ENCODE measurements at regions of chr2 and their contacts with region 1.

Region 1: GRCh38 chr2:202014759-202015211 is 18.9 kb upstream of the FZD7 start:
- DNase-seq: no peak
- ATAC-seq: no peak
- H3K4me3 ChIP-seq: no peak overlapping the region
- H3K4me3 Mint-ChIP-seq: no peak overlapping the region
- H3K27ac ChIP-seq: no peak overlapping the region
- H3K27ac Mint-ChIP-seq: no peak overlapping the region
- H3K4me1 ChIP-seq: no peaks in the 10 kb centered on the region
- H3K4me1 Mint-ChIP-seq: no peaks in the 10 kb centered on the region
- H3K27me3 ChIP-seq: no peaks in the 10 kb centered on the region
- H3K27me3 Mint-ChIP-seq: peaks cover 19% of the 10 kb centered on the region
- CTCF ChIP-seq: no peak

Region 2: GRCh38 chr2:202056392-202057010 is 41.7 kb after region 1 on chr2:
- CTCF ChIA-PET with region 1: no interaction called
- POLR2A ChIA-PET with region 1: no interaction called
- intact Hi-C with region 1: loop called in 1 of 2 experiments (anchors 5 kb)
- DNase-seq: peak in 2 of 9 experiments; percentile 13 to 24
- ATAC-seq: no peak
- H3K4me3 ChIP-seq: no peak overlapping the region
- H3K4me3 Mint-ChIP-seq: no peak overlapping the region
- H3K27ac ChIP-seq: no peak overlapping the region
- H3K27ac Mint-ChIP-seq: no peak overlapping the region
- H3K4me1 ChIP-seq: no peaks in the 10 kb centered on the region
- H3K4me1 Mint-ChIP-seq: no peaks in the 10 kb centered on the region
- H3K27me3 ChIP-seq: peaks cover 2 to 4% of the 10 kb centered on the region in 2 experiments
- H3K27me3 Mint-ChIP-seq: peaks cover 56% of the 10 kb centered on the region
- CTCF ChIP-seq: no peak

Measured in CD8-positive, alpha-beta T cell (primary cell).